Ascending aorta (tissue), 2 donors: ENCODE measurements at regions of chr9 and their contacts with region 1.

Region 1: GRCh38 chr9:20941174-20941690 is 90.2 kb downstream of the HACD4 start:
- DNase-seq: peak in 1 of 2 donors; percentile 68
- H3K4me3 ChIP-seq: no peak overlapping the region
- H3K27ac ChIP-seq: no peak overlapping the region
- H3K4me1 ChIP-seq: no peaks in the 10 kb centered on the region
- H3K27me3 ChIP-seq: no peaks in the 10 kb centered on the region
- CTCF ChIP-seq: peak; percentile 48 to 89 (median 76)

Region 2: GRCh38 chr9:19875291-19875920 is 1065.8 kb before region 1 on chr9:
- intact Hi-C with region 1: no loop called
- DNase-seq: no peak
- H3K4me3 ChIP-seq: no peak overlapping the region
- H3K27ac ChIP-seq: no peak overlapping the region
- H3K4me1 ChIP-seq: no peaks in the 10 kb centered on the region
- H3K27me3 ChIP-seq: no peaks in the 10 kb centered on the region
- CTCF ChIP-seq: no peak

Region 3: DNA sequence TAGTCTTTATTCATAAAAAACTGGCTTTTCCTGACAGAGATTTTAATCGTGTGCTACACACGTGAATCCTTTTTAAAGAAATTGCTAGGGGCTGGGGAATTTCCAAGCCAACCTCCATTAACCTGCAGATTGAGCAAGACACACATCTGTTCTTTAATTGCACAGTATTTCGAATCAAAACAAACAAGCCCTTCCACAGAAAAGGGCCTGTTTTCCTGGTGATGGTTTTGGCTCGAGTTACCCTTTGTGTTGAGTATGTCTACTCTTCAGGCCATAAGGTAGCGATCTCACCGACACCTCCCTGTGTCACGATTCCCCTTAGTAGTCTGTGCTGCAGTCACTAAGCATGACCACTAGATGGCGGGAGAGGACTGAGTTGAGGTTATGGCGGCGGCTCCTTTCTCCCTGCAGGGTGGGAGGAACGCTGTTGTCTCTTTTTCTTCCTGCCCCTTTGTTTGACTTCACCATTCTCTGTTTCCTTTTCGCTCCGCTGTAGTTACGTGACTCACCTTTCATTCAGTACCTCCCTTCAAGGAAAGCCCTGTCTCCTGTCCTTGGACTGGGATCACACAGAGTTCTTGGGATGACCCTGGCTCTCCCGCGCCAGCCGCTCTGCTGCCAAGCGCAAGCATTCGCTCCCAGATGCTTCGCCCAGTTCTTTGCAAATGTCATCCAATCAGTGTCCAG is 1015.3 kb before region 1 on chr9:
- intact Hi-C with region 1: loop called (anchors 2 kb)
- DNase-seq: peak in 1 of 2 donors; percentile 74
- H3K4me3 ChIP-seq: peak overlapping the region; percentile 42 to 54
- H3K27ac ChIP-seq: no peak overlapping the region
- H3K4me1 ChIP-seq: no peaks in the 10 kb centered on the region
- H3K27me3 ChIP-seq: no peaks in the 10 kb centered on the region
- CTCF ChIP-seq: peak; percentile 76 to 97 (median 90)

Region 4: DNA sequence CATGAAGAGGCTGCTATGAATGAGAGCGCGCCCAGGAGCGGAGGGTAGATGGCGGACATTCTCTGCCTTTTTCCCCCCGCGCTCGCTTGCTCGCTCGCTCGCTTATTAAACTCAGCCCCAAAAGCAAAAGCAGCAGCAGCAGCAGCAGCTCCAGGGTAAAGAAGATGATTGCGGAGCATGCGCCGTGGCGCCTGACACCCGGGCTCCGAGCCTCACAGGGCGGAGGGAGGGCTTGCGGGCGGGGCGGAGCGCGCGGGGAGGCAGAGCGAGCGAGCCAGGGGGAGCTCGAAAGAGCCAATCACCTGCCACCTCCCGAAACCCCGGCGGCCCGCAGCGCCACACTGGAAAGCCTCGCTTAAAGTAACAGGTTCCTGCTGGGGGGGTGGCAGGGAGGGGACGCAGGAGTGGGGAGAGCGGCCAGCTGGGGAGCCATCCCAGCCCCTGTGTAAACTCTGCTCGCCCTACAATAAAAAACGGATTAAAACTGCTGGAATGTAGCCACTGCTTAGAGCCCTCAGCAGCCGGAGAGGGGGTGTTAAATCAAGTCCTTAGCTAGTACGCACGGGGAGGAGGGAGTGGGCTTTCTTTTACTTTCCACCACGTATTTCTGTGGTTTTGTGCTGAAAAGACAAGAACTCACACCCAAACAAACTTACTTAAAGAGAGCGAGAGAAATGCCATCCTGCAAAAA is 318.8 kb before region 1 on chr9 and contains the start of gene MLLT3:
- intact Hi-C with region 1: loop called (anchors 1 kb)
- DNase-seq: peak; percentile 82 to 98
- H3K4me3 ChIP-seq: peak within 1 kb of the TSS; percentile 89
- H3K27ac ChIP-seq: peak within 1 kb of the TSS; percentile 69 to 91
- H3K4me1 ChIP-seq: peaks cover 3 to 8% of the 10 kb centered on the region in 2 donors
- H3K27me3 ChIP-seq: no peaks in the 10 kb centered on the region
- CTCF ChIP-seq: no peak
- total RNA-seq, gene MLLT3: 16.8 TPM

Region 5: DNA sequence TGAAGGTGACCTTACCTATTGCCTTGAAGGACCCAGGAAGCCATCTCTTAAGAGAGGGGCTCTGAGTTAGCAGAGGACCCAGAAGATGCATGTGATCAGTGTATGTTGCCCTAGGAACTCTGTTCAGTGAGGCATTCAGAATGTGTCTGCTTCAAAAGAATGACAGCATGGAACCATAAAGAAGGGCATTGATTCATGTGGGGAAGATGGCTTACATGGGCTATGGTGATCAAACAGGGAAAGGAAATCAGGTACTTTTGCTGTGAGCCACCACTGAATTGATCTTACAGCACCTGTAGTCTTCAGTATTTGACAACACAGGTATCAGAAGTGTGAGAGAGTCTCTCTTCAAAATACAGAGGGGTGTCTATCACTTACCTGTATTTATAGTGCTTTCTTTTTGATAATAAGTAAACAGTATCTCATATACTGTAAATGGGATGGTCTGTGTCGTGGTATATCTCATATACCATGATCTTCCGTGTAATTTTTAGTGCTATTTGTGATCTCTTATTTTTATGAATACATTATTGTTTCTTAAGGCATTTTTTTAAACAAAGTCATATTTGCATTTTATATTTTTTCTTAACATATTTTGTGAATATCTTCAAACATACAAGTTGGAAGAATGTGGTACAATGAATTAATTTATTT is 200.2 kb before region 1 on chr9:
- intact Hi-C with region 1: no loop called
- DNase-seq: no peak
- H3K4me3 ChIP-seq: no peak overlapping the region
- H3K27ac ChIP-seq: no peak overlapping the region
- H3K4me1 ChIP-seq: no peaks in the 10 kb centered on the region
- H3K27me3 ChIP-seq: no peaks in the 10 kb centered on the region
- CTCF ChIP-seq: no peak

Region 6: DNA sequence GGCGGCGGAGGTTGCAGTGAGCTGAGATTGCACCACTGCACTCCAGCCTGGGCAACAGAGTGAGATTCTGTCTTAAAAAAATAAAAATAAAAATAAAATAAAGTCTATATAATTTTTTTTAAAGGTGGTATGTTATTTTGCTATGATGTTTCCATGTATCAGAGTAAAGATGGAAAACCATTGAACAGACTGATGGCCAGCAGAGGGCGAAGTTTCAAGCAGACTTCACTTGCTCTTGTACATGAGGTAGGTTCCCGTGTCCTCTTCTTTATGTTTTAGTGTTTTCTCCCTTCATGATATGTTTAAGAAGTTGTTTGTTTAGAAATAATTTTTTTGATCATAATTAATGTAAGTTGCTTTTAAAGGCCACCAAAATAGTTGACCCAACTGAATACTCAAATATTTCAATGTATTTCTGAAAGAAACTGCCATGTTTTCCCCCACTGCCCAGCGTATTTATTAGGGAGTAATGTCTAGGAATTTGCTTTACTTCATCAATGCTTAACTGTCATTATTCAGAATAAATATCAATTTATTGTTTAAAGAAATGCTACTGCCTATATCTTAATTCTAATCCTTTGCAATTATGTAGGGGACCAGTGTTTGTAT is 56.1 kb before region 1 on chr9:
- intact Hi-C with region 1: loop called (anchors 10 kb)
- DNase-seq: peak in 1 of 2 donors; percentile 70
- H3K4me3 ChIP-seq: no peak overlapping the region
- H3K27ac ChIP-seq: no peak overlapping the region
- H3K4me1 ChIP-seq: no peaks in the 10 kb centered on the region
- H3K27me3 ChIP-seq: no peaks in the 10 kb centered on the region
- CTCF ChIP-seq: peak; percentile 24 to 64 (median 52)